ENCODE measurements at regions of chr2 and their contacts with region 1.

Region 1: DNA sequence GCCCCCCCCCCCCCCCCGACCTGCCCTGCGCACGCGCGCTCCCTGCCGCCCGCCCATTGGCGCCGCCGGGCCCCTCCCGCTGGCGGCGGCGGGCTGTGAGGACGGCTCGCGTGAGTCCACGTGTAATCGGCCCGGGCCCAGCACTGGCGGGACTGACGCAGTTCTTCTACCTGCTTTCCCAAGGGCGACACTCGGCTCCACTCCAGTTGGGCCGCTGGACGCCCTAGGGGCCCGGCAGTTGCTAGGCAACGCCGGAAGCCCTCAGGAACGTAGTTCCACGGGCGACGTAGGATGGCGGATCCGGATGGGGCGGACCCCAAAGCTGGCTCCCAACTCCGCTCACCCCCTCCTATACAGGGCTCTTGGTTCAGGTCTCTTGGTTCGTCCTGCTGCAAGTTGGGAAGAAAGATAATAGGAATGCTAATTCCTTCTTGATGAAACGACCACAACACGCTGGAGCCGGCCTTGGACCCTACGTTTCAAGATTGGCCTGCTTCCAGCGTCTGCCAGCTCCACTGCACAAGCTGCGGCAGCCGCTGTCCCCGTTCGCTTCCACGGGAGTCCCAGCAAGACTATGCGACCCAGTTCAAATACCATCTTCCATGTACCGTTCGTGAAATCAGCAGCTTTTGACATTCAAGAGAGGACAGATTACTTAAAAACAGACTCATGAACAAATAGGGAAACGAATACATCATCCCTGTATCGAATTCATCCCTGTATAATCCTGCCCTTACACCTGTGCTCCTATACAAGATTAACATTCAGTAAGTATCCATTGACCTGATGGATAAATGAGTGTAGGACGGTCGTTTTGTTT is 415 bp upstream of the MCFD2 start:
- DNase-seq: peak; percentile 80 to 93 (median 89)
- ATAC-seq: peak; percentile 94
- H3K4me3 ChIP-seq: peak overlapping the region; percentile 93
- H3K4me1 ChIP-seq: peaks cover 28% of the 10 kb centered on the region
- CTCF ChIP-seq: no peak

Region 2: GRCh38 chr2:47323009-47323821 is 407.2 kb after region 1 on chr2:
- intact Hi-C with region 1: loop called in 1 of 2 experiments (anchors 10 kb)
- DNase-seq: peak; percentile 75 to 87 (median 86)
- ATAC-seq: peak; percentile 97
- H3K4me3 ChIP-seq: no peak overlapping the region
- H3K4me1 ChIP-seq: peaks cover 6% of the 10 kb centered on the region
- CTCF ChIP-seq: peak; percentile 85

Measured in mucosa of descending colon (tissue), 3 donors.